ENCODE measurements at regions of chr6 and their contacts with region 1.

Region 1: GRCh38 chr6:97059473-97059872 is 134.9 kb downstream of the KLHL32 start:
- DNase-seq: no peak
- ATAC-seq: peak; percentile 39
- H3K4me3 ChIP-seq: no peak overlapping the region
- H3K4me1 ChIP-seq: no peaks in the 10 kb centered on the region
- CTCF ChIP-seq: peak; percentile 16

Region 2: GRCh38 chr6:96613291-96613999 is 446.0 kb before region 1 on chr6:
- intact Hi-C with region 1: no loop called
- DNase-seq: no peak
- ATAC-seq: no peak
- H3K4me3 ChIP-seq: no peak overlapping the region
- H3K4me1 ChIP-seq: no peaks in the 10 kb centered on the region
- CTCF ChIP-seq: no peak

Region 3: DNA sequence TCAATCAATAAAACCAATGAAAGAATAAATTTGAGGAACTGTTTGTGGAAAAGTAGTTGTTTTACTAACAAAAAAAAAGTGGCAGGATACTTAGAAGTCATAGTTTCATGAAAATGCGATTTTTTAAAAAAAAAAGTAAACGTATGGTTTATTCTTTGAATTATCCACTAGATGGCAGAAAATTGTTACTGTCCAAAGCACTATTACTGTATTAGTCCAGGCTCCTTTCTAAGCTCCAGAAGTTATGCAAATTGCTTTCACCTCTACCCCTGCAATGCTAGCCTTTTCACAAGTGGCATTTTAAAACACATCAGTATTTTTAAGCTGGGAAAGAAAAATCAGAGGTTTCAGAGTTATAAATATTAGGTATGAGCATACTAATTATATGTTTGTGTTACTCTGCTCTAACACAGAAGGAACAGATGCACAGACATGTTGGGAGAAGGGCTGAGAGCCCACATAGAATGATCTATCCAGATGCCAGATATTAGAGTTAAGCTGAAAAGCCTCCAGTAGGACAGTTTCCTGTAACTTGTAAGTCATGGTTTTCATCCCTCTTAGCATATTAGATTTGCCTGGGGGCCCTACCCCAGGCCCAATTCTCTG is 432.6 kb before region 1 on chr6:
- intact Hi-C with region 1: loop called in 1 of 2 experiments (anchors 5 kb)
- DNase-seq: no peak
- ATAC-seq: peak; percentile 34
- H3K4me3 ChIP-seq: no peak overlapping the region
- H3K4me1 ChIP-seq: no peaks in the 10 kb centered on the region
- CTCF ChIP-seq: no peak